Heart right ventricle (tissue), 16 donors: ENCODE measurements at regions of chr10 and their contacts with region 1.

Region 1: DNA sequence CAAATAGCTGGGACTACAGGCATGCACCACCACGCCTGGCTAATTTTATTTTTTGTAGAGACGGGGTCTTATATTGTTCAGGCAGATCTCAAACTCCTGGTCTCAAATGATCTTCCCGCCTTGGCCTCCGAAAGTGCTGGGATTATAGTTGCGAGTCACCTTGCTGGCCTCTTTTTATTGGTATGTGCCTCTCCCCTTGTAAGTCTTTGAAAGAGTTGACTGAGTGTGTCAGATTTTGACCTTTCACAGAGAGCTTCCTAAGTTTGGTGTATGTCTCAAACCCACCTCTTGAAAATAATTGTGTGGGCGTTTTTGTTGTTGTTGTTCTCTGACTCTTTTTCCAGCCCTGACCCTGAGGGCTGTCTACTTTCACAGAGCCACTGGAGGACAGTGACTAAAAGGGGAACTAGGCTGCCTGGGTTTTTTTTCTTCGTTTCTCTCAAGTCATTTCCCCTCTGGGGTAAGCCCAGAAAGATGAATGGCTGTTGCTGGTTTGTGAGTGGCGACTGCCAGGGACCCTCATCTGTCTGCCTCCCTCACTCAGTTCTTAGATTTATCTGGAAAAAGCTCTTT is 262.8 kb downstream of the ZEB1 start:
- DNase-seq: peak in 1 of 2 donors; percentile 27
- ATAC-seq: peak in 7 of 8 donors; percentile 39 to 54 (median 48)
- H3K4me3 ChIP-seq: no peak overlapping the region
- H3K27ac ChIP-seq: peak overlapping the region in 8 of 10 donors; percentile 16 to 83 (median 66)
- H3K4me1 ChIP-seq: peaks cover 6 to 53% (median 36%) of the 10 kb centered on the region in 9 donors
- H3K27me3 ChIP-seq: no peaks in the 10 kb centered on the region
- CTCF ChIP-seq: no peak

Region 2: DNA sequence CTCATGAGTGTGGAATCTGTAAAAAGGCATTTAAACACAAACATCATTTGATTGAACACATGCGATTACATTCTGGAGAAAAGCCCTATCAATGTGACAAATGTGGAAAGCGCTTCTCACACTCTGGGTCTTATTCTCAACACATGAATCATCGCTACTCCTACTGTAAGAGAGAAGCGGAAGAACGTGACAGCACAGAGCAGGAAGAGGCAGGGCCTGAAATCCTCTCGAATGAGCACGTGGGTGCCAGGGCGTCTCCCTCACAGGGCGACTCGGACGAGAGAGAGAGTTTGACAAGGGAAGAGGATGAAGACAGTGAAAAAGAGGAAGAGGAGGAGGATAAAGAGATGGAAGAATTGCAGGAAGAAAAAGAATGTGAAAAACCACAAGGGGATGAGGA is 55.1 kb before region 1 on chr10:
- intact Hi-C with region 1: loop called in 2 of 10 experiments (anchors 5 kb)
- DNase-seq: no peak
- ATAC-seq: no peak
- H3K4me3 ChIP-seq: no peak overlapping the region
- H3K27ac ChIP-seq: peak overlapping the region in 5 of 10 donors; percentile 31 to 49 (median 36)
- H3K4me1 ChIP-seq: peaks cover 0 to 31% (median 7%) of the 10 kb centered on the region in 9 donors
- H3K27me3 ChIP-seq: no peaks in the 10 kb centered on the region
- CTCF ChIP-seq: no peak